HEK293 (cell line): ENCODE measurements at regions of chr1 and their contacts with region 1.

Region 1: DNA sequence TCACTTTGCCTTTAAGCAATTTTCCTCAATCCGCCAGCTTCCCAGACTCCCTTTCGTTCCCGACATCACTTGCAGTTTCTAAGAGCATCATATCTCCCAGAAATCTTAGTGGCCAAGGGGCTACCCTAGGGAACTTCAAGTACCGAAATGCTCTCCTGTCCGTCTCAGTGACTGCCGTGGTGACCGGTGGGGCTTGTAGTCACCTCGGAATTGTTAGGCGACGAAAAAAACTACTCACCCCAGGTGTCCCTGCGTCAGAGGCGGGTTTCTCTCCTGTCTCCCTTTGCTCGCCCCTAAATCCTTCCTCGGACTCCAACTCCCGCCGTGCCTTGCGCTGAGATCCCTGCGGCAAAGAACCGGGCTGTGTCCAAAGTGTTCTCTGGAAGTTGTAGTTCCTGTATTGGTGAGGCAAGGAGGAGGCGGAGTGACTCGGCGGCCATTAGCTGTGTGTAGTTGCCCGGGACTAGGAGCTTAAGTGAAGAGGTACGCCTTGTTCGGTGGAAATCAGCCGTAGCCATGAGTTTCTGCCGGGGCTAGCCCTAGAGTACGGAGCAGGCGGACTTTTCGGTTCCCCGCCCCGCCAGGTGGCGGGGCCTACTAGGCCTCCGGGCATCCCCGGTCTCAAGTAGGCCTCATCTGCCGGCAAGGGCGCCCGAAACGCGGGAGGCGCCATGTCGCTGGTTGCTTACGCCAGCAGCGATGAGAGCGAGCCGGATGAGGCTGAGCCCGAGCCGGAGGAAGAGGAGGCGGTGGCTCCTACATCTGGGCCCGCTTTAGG is at the start of gene PRCC:
- H3K4me3 ChIP-seq: peak within 1 kb of the TSS; percentile 92
- H3K27ac ChIP-seq: peak within 1 kb of the TSS; percentile 94
- H3K4me1 ChIP-seq: peaks cover 6% of the 10 kb centered on the region; the same call in 1 of the 2 replicates
- CTCF ChIP-seq: peak; percentile 60

Region 2: DNA sequence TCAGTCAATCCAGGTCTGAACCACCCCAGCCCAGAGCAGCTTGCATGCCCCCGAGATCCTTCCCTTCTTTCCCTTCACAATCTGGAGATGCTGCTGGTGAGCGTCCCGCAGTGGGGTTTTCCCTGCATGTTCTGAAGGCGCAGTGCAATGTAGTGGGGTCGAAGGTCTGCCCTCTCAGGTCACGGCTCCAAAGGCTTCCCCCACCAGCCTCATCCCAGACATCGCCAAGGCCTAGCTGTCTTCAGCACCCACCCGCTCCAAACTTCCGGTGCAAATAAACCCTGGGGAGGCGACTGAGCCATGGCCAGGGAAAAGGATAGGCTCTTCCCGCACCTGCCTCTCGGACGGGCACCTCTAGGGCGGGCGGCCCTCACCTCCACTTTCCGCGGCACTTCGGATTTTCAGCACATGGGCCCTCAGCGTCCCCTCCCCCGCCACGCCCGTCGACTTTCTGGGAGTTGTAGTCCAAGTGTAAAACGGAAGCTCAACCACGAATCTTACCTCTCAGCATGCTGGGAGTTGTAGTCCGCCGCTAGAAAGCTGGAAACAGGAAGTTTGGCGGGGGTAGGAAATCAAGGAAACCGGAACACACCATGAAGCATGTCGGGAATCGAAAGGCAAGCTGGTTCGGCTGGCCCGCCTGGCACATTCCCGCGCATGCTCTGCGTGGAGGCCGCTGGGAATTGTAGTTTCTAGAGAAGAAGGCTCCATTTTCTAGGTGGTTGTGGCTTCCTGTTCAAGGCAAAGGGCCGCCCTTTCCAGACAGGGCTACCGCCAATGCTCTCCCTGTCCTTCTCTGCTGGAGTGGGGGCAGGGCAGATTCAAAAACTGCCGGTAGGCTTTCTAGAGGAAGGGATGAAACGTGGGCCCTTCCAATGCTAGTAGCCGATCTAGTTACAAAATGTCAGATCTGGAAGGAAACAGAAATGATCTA is 26.3 kb before region 1 on chr1 and contains the start of gene MRPL24:
- CTCF ChIA-PET with region 1: interaction called, 5 read pairs
- POLR2A ChIA-PET with region 1: interaction called, 110 read pairs
- H3K4me3 ChIP-seq: peak within 1 kb of the TSS; percentile 74
- H3K27ac ChIP-seq: peak within 1 kb of the TSS; percentile 59
- H3K4me1 ChIP-seq: no peaks in the 10 kb centered on the region
- CTCF ChIP-seq: 0 out of 2 replicates have a peak, but pooled peaks have one; percentile 11

Region 3: GRCh38 chr1:156746728-156747631 is 20.3 kb before region 1 on chr1:
- CTCF ChIA-PET with region 1: interaction called, 3 read pairs
- POLR2A ChIA-PET with region 1: interaction called, 110 read pairs
- H3K4me3 ChIP-seq: peak overlapping the region; percentile 51
- H3K27ac ChIP-seq: peak overlapping the region; percentile 95
- H3K4me1 ChIP-seq: peaks cover 11% of the 10 kb centered on the region; the same call in 1 of the 2 replicates
- CTCF ChIP-seq: peak; percentile 66

Region 4: DNA sequence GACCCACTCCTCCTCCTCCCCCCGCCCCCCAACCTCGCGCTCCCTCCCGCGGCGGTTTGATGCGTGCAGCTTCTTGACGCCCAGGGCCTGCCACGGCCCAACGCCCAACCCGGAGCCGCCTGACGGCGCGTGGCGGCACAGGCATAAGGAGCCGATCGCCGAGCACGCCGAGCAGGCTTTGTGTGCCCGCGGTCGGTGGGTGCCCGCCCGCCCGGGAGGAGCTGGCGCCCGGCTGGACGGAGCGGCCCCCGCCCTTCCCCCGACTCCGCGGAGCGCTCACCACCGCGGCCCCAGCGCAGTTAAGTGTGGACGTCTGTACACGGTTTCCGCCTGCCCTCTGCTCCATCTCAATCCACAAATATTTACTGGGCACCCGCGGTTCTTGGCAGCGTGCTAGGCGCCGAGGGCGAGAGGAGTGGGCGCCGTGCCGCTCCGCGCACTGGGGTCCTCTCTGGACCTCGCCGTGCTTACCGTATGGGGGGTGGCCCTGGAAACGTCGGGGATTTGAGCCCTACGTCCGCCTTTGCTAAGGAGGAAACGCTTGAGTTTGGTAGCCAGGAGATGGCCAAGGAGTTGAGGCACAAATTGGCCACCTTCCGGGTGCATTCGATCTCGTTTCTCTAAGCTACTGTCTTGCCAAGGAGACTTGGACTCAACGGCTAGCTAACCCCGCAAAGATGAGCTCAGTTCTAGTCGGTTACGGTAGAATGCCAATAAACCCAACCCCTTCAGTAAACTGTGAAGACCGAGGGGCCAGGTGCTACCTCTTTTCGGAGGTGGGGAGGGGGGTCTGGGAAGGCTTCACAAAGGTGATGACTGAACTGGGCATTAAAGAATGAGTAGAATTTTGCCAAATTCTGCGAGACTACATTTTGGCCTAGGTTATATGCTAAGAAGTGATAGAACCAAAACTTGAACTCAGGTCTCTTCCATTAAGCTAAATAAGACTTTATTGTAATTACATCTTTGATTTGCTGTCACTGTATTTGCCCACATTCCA is 15.2 kb before region 1 on chr1:
- CTCF ChIA-PET with region 1: interaction called, 4 read pairs
- POLR2A ChIA-PET with region 1: interaction called, 41 read pairs
- H3K4me3 ChIP-seq: peak overlapping the region; percentile 87
- H3K27ac ChIP-seq: peak overlapping the region; percentile 71
- H3K4me1 ChIP-seq: 0 out of 2 replicates have a peak, but pooled peaks cover 11% of the 10 kb centered on the region
- CTCF ChIP-seq: peak; percentile 17; the same call in 1 of the 2 replicates

Region 5: DNA sequence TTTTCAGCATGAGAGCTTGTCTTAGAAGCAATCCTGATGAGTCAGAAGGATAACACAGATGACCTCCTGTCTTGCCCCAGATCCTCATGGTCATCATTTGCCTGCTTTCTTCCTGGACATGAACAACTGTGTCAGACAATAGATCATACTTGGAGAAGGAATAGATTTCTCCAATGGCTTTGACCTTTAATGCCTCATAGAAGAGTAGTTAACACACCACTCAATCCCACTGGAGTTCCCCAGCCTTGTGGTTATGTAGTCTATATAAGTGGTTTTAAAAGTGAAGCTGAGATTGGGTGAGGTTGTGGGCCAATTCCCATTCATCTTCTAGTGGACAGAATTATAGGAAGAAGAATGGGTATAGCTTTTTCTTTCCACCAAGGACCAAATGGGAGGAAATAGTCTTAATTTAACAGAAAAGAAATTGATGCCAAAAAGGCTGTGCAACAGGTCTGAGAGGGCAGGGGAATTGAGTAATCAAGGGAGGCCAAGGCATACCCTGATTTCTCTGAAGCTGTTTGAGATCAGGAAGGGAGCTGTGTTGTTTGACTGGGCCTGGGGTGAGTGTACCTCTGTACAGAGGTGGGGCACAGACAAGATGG is 14.4 kb after region 1 on chr1:
- CTCF ChIA-PET with region 1: interaction called, 11 read pairs
- POLR2A ChIA-PET with region 1: interaction called, 4 read pairs
- H3K4me3 ChIP-seq: no peak overlapping the region
- H3K27ac ChIP-seq: no peak overlapping the region
- H3K4me1 ChIP-seq: 0 out of 2 replicates have a peak, but pooled peaks cover 4% of the 10 kb centered on the region
- CTCF ChIP-seq: no peak

Region 6: DNA sequence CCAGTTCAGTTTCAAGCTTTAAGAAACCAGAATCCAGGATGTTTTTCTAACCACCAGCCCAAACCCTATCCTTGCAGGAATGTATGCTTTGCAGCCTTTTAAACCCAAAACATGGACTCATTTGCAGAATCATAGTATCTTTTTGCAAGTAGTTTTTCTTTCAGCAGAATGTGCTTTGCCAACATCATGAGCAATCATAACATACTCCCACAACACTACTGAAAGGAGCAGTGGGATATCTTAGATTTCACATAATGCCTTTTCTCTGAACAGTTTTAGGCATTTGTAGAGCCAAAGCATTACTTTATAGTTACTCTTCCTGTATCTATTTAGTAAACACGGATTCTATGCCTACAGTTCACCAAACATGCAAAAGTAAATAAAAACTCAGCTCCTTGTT is 59.3 kb after region 1 on chr1:
- CTCF ChIA-PET with region 1: no interaction called
- POLR2A ChIA-PET with region 1: no interaction called
- H3K4me3 ChIP-seq: no peak overlapping the region
- H3K27ac ChIP-seq: no peak overlapping the region
- H3K4me1 ChIP-seq: no peaks in the 10 kb centered on the region
- CTCF ChIP-seq: no peak

Region 7: GRCh38 chr1:157274698-157275534 is 507.6 kb after region 1 on chr1:
- CTCF ChIA-PET with region 1: no interaction called
- POLR2A ChIA-PET with region 1: no interaction called
- H3K4me3 ChIP-seq: no peak overlapping the region
- H3K27ac ChIP-seq: no peak overlapping the region
- H3K4me1 ChIP-seq: peaks cover 11% of the 10 kb centered on the region
- CTCF ChIP-seq: no peak